ENCODE measurements at regions of chr6 and their contacts with region 1.

Region 1: DNA sequence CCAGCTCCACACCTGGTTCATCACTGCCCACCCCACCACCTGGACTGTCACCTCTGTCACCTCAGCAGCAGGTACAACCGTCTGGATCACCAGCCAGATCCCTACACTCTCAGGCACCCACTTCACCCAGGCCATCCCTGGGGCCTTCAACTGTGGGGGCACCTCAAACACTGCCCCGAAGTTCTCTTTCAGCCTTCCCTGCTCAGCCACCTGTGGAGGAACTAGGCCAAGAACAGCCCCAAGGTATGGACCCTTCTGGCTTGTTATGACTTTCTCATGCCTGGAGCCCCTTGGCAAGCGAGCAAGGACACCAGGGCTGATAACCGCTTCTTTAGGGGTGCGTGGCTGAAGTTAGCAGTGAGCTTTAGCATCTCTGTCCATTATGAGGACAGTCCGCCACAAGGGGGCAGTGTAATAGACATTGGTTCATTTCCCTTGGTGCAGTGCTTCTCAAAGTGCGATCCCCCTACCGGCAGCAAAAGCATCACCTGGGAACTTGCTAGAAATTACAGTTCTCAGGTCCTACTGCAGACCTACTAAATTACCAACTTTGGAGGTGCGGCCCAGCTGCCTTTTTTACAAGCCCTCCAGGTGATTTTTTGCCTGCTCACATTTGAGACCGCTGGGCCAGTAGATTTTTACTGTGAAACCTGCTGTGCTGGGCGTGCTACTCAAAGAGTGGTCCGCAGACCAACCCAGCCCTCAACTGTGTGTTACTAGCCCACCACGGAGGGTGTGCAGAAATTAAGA is 32.5 kb downstream of the PNPLA1 start:
- DNase-seq: peak; percentile 64 to 90
- ATAC-seq: peak; percentile 95 to 99
- H3K4me3 ChIP-seq: no peak overlapping the region
- H3K27ac ChIP-seq: no peak overlapping the region
- H3K4me1 ChIP-seq: 0 out of 3 replicates have a peak, but pooled peaks cover 2% of the 10 kb centered on the region
- CTCF ChIP-seq: peak; percentile 85
- EP300 ChIP-seq: no peak
- POLR2A ChIP-seq: no peak
- RAD21 ChIP-seq: peak; percentile 57 to 62

Region 2: GRCh38 chr6:36248980-36249379 is 53.4 kb before region 1 on chr6:
- CTCF ChIA-PET with region 1: interaction called, 11 read pairs
- POLR2A ChIA-PET with region 1: no interaction called
- DNase-seq: no peak
- ATAC-seq: no peak
- H3K4me3 ChIP-seq: no peak overlapping the region
- H3K27ac ChIP-seq: no peak overlapping the region
- H3K4me1 ChIP-seq: no peaks in the 10 kb centered on the region
- CTCF ChIP-seq: no peak
- EP300 ChIP-seq: no peak
- POLR2A ChIP-seq: no peak
- RAD21 ChIP-seq: no peak

Region 3: DNA sequence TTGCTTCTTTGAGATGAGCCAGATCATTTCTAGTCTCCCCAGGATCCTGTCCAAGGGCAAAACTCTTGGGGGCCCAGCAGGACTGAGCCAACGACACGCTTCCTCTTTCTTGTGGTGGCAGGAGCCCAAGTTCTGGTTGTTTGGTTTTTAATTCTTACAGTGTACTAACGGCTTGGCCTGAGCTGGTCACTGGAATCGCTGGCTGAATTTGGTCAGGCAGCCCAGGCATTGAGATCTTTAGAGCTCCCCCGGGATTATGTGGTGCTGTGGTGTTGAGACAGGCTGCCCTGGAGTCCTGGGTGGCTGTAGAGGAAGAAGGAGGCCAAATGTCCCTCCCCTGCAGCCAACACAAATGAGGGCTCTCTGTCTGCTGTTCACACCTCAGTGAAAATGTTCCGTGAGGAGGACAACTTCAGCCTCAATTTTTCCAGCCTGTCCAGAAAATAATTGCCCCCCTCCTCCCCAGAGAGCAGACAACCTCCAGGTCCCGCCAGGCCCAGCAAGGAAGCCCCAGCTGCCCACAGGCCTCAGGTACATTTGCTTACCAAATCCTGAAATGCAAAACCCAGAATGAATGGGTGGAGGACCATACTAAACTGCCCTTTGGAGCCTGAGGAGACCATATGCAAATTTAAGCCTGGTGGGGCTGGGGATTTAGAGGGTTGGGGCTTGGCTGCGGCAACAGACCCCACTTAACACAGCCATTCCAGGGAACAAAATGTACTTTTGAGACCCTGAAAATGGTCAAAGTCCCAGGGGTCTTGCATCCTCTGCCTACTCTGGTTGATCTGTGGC is 10.6 kb after region 1 on chr6:
- CTCF ChIA-PET with region 1: interaction called, 19 read pairs
- POLR2A ChIA-PET with region 1: no interaction called
- DNase-seq: no peak
- ATAC-seq: no peak
- H3K4me3 ChIP-seq: no peak overlapping the region
- H3K27ac ChIP-seq: no peak overlapping the region
- H3K4me1 ChIP-seq: no peaks in the 10 kb centered on the region
- CTCF ChIP-seq: no peak
- EP300 ChIP-seq: no peak
- POLR2A ChIP-seq: no peak
- RAD21 ChIP-seq: no peak

Region 4: GRCh38 chr6:36340618-36341454 is 38.4 kb after region 1 on chr6:
- CTCF ChIA-PET with region 1: interaction called, 14 read pairs
- POLR2A ChIA-PET with region 1: no interaction called
- DNase-seq: peak; percentile 60 to 68
- ATAC-seq: peak; percentile 84 to 94
- H3K4me3 ChIP-seq: 0 out of 3 replicates have a peak overlapping the region, but pooled peaks have one; percentile 21
- H3K27ac ChIP-seq: peak overlapping the region in 1 of 2 experiments; percentile 27; a peak in 1 of 6 replicates
- H3K4me1 ChIP-seq: no peaks in the 10 kb centered on the region
- CTCF ChIP-seq: peak; percentile 77
- EP300 ChIP-seq: no peak
- POLR2A ChIP-seq: no peak
- RAD21 ChIP-seq: peak; percentile 41 to 46

Region 5: DNA sequence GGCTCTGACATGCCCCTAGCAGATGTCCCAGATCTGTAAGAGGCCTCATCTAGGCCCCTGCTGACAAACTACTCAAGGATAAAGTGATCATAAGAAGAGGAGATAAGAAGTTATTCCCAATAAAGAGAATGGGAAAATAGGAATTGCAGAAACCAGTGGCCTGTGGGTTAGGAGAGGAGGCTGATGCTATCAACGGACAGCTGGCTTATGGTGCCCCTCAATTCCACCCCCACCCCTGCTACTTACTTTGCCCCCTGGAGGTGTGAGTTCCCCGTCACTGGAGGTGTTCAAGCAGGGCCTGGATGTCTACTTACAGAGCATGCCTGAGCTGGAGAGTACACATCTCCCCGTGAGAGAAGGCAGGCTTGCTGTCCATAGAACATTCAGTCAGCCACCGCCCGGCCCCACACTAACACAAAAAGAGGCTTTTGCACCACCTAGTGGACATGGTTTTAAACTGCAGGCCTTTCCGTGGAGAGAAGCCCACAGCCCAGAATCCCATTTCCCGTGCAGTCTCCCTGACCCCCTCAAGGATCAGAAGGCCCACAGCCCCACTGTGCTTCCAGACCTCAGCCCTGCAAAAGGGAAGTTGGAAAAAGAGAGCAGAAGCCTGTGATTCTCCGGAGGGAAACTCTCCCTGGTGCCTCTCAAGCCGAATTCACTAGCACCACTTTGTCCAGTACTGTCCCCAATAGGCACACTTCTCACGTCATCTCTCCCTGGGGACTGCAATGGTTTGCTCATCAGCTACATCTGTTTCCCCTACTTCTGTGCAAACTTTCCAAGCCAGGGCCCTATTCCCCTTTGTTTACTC is 58.0 kb after region 1 on chr6:
- CTCF ChIA-PET with region 1: interaction called, 26 read pairs
- POLR2A ChIA-PET with region 1: no interaction called
- DNase-seq: peak; percentile 53 to 68
- ATAC-seq: peak; percentile 90 to 96
- H3K4me3 ChIP-seq: no peak overlapping the region
- H3K27ac ChIP-seq: no peak overlapping the region
- H3K4me1 ChIP-seq: 0 out of 3 replicates have a peak, but pooled peaks cover 6% of the 10 kb centered on the region
- CTCF ChIP-seq: peak; percentile 65
- EP300 ChIP-seq: no peak
- POLR2A ChIP-seq: no peak
- RAD21 ChIP-seq: peak; percentile 78 to 84

Measured in A549 (cell line).